Right ventricle myocardium superior (tissue), 1 donor: ENCODE measurements at regions of chr2 and their contacts with region 1.

Region 1: GRCh38 chr2:218301176-218301819 is 9.0 kb upstream of the TMBIM1 start:
- DNase-seq: peak; percentile 81
- ATAC-seq: peak; percentile 90

Region 2: DNA sequence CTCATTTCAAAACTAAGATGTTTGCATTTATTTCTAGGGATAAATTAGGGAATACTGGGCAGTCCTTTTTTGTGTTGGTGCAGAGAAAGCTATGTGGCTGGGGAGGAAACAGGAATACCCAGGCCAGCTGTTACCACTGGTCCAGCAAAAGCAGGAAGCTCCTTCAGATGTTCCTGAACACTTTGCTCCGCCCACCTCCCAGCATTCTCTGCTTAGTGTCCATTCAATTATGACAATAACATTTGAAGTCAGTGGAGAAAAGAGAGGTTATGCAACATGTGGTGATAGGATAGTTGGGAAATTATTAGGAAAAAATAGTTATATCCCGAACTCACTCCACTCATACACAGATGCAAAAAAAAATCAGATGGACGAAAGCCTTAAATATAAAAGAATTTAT is 106.4 kb before region 1 on chr2:
- intact Hi-C with region 1: no loop called
- DNase-seq: peak; percentile 56
- ATAC-seq: no peak

Region 3: GRCh38 chr2:218357236-218358159 is 56.2 kb after region 1 on chr2:
- intact Hi-C with region 1: loop called (anchors 5 kb)
- DNase-seq: no peak
- ATAC-seq: no peak

Region 4: GRCh38 chr2:218448934-218449333 is 147.6 kb after region 1 on chr2:
- intact Hi-C with region 1: no loop called
- DNase-seq: no peak
- ATAC-seq: no peak

Region 5: DNA sequence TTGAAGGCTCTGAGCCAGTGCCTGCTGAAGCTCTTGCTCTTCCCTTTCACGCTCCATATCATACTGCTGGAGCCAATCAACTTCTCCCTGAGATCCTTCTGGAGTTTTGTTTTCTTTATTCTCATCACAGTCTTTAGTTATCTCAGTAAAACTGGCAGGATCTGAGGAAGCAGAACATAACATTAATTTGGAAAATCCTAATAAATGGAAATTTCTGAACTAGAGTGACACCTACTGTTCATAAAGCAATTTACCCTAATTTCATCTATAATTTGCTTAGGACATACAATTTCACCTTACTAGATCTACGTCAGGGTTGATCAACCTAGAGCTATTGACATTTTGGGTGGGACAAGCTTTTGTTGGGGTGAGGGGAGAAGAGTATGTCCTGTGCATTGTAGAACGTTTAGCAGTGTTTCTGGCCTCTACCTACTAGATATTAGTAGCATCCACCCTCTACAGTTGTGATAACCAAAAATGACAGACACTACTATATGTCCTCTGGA is 164.8 kb after region 1 on chr2:
- intact Hi-C with region 1: loop called (anchors 5 kb)
- DNase-seq: no peak
- ATAC-seq: peak; percentile 43